HCT116 (cell line): ENCODE measurements at regions of chr1 and their contacts with region 1.

Region 1: GRCh38 chr1:20151906-20152598 is 12.9 kb downstream of the PLA2G2F start:
- DNase-seq: peak; percentile 26
- ATAC-seq: peak; percentile 99
- H3K4me3 ChIP-seq: no peak overlapping the region
- H3K27ac ChIP-seq: no peak overlapping the region
- H3K4me1 ChIP-seq: peaks cover 0 to 5% of the 10 kb centered on the region in 2 experiments; a peak in 2 of 4 replicates
- H3K27me3 ChIP-seq: no peaks in the 10 kb centered on the region
- CTCF ChIP-seq: peak; percentile 67 to 94 (median 93)
- POLR2A ChIP-seq: no peak
- RAD21 ChIP-seq: peak; percentile 99

Region 2: GRCh38 chr1:19918057-19918456 is 234.0 kb before region 1 on chr1:
- CTCF ChIA-PET with region 1: interaction called, 13 read pairs
- POLR2A ChIA-PET with region 1: interaction called, 6 read pairs
- RAD21 ChIA-PET with region 1: interaction called in 1 of 2 experiments, 3 read pairs
- intact Hi-C with region 1: loop called (anchors 1 kb)
- DNase-seq: peak; percentile 75
- ATAC-seq: peak; percentile 80
- H3K4me3 ChIP-seq: no peak overlapping the region
- H3K27ac ChIP-seq: no peak overlapping the region
- H3K4me1 ChIP-seq: peaks cover 0 to 13% of the 10 kb centered on the region in 2 experiments; a peak in 2 of 4 replicates
- H3K27me3 ChIP-seq: no peaks in the 10 kb centered on the region
- CTCF ChIP-seq: peak; percentile 91 to 93 (median 92)
- POLR2A ChIP-seq: no peak
- RAD21 ChIP-seq: peak; percentile 99

Region 3: GRCh38 chr1:19974822-19975416 is 177.1 kb before region 1 on chr1:
- CTCF ChIA-PET with region 1: interaction called, 20 read pairs
- POLR2A ChIA-PET with region 1: no interaction called
- RAD21 ChIA-PET with region 1: interaction called, 3 to 6 read pairs
- intact Hi-C with region 1: loop called (anchors 1 kb)
- DNase-seq: peak; percentile 60
- ATAC-seq: peak; percentile 98
- H3K4me3 ChIP-seq: no peak overlapping the region
- H3K27ac ChIP-seq: no peak overlapping the region
- H3K4me1 ChIP-seq: 0 out of 4 replicates have a peak, but pooled peaks cover 0 to 3% of the 10 kb centered on the region in 2 experiments
- H3K27me3 ChIP-seq: 0 out of 2 replicates have a peak, but pooled peaks cover 4% of the 10 kb centered on the region
- CTCF ChIP-seq: peak; percentile 70 to 97 (median 87); a peak in 5 of 6 replicates
- POLR2A ChIP-seq: no peak
- RAD21 ChIP-seq: peak; percentile 94

Region 4: DNA sequence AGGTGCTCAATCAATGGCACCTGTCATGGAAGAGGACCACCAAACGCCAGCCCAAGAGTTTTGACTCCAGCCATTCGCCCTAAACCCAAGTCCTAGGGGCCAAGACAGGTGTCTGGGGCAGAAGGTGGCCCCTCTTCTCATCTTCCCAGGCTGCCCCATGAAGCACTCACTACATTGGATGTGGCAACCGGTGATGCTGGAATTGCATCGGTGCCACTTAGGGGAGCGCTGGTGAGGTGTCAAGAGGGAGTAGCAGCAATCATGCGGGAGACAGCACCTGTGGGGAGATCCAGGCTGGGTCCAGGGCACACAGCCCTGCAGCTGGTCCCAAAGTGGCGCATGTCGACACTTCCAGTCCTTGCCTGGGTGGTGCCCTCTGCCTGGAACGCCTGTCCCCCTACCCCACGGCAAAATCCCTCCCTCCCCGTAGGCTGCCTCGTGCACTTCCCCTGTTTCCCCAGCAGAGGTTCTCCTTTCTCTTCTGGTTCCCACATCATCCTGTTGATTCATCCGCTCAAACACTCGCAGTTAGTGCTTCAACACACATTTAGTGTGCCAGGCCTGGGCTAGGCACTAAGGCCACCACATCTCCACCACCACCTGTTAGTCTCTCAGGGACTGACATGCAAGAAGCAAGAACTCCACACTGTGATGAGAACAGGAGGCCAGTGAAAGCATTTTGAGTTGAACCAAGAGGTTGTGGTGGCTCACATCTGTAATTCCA is 51.3 kb before region 1 on chr1:
- CTCF ChIA-PET with region 1: interaction called, 18 read pairs
- POLR2A ChIA-PET with region 1: no interaction called
- RAD21 ChIA-PET with region 1: interaction called, 5 read pairs
- intact Hi-C with region 1: loop called (anchors 1 kb)
- DNase-seq: peak; percentile 52
- ATAC-seq: peak; percentile 96
- H3K4me3 ChIP-seq: no peak overlapping the region
- H3K27ac ChIP-seq: no peak overlapping the region
- H3K4me1 ChIP-seq: peaks cover 0 to 1% of the 10 kb centered on the region in 2 experiments; a peak in 1 of 4 replicates
- H3K27me3 ChIP-seq: no peaks in the 10 kb centered on the region
- CTCF ChIP-seq: peak; percentile 81 to 88 (median 87)
- POLR2A ChIP-seq: no peak
- RAD21 ChIP-seq: peak; percentile 98

Region 5: DNA sequence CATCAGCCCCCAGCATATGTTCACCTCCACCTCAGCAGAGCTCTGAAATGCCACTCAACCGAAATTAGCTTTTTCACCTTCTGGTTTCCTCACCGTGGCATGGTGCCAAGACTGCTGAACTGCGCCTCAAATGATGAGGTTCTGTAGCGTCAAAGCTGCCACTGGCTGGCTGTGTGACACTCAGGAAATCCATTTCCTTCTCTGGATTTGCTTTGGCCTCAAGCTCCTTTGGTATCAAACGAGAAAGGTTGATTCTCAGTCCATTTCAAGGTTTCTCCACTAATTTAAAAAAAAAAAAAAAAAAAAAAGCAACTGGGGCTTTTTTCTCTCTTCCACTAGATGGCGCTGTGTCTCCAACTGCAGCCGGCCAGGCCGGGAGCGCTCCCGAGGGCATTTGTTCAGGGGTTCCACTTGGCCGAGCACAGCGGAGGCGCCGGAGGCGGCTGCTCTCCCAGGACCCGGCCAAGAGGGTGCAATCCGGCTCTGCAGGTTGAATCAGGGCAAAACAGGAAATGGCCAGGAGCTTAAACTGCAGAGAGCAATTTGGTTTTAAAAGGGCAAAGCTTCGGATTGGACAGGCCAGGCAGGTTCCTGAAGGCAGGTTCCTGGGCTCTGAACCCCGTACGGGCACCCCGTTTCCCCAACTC is 60.8 kb after region 1 on chr1:
- CTCF ChIA-PET with region 1: no interaction called
- POLR2A ChIA-PET with region 1: no interaction called
- RAD21 ChIA-PET with region 1: no interaction called
- intact Hi-C with region 1: no loop called
- DNase-seq: peak; percentile 54
- ATAC-seq: peak; percentile 90
- H3K4me3 ChIP-seq: peak overlapping the region; percentile 2 to 24; a peak in 1 of 4 replicates
- H3K27ac ChIP-seq: no peak overlapping the region
- H3K4me1 ChIP-seq: peaks cover 9 to 28% of the 10 kb centered on the region in 2 experiments
- H3K27me3 ChIP-seq: no peaks in the 10 kb centered on the region
- CTCF ChIP-seq: peak; percentile 76 to 86 (median 81)
- POLR2A ChIP-seq: no peak
- RAD21 ChIP-seq: peak; percentile 86